Activated CD4-positive, alpha-beta memory T cell treated with anti-CD3 and anti-CD28 coated beads, Interleukin-2, amount 10 ng/mL, durations not matched to agents 7 days and 5 days (primary cell): ENCODE measurements at regions of chr12 and their contacts with region 1.

Region 1: DNA sequence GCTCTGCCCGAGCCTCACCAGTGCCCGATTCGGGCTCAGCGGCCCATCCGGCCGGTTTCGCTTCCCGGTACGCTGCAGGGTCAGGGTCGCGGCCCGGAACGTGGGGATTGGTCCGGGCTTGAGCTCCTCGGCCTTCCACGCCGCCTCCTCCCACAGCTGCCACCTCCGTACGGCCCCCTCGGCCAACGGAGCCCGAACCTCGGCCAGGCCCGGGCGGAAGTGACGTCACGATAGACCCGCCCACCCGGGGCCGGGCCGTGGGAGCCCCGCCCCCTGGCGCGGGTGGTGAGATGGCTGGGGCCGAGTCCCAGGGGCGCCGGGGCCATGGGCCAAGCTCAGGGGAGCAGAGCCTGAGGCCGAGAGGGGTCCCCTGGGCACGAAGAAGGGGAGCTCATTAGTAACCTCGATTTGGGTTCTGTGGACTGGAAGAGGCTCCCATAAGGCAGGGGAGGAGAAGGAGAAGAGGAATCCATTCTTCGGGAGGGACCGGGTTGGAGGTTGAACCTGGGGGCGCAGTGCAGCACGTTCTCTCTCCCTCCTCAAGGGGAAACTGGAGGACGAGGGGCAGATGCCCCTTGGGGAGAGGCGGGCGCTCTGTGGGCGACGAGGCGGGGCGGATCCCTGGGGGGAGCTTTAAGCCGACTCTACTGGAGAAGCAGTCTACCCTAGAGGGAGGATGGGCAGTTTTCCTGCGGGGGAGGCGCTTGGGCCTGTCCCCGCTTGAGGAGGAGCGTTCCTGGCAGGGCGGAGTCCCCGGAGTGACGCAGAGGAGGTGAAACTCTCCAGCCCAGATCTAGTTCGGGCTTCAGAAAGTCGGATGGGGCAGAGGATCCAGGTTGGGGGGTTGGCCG is at the start of gene MLF2:
- DNase-seq: peak; percentile 98
- H3K4me3 Mint-ChIP-seq: peak within 1 kb of the TSS; percentile 92
- H3K27ac Mint-ChIP-seq: peak within 1 kb of the TSS; percentile 90
- H3K4me1 Mint-ChIP-seq: peaks cover 25% of the 10 kb centered on the region
- H3K27me3 Mint-ChIP-seq: peaks cover 4% of the 10 kb centered on the region
- total RNA-seq, gene MLF2: 101 to 108 TPM

Region 2: GRCh38 chr12:6613776-6614512 is 139.2 kb before region 1 on chr12:
- CTCF ChIA-PET with region 1: no interaction called
- POLR2A ChIA-PET with region 1: interaction called, 10 read pairs
- DNase-seq: peak; percentile 61
- H3K4me3 Mint-ChIP-seq: no peak overlapping the region
- H3K27ac Mint-ChIP-seq: no peak overlapping the region
- H3K4me1 Mint-ChIP-seq: peaks cover 46% of the 10 kb centered on the region
- H3K27me3 Mint-ChIP-seq: no peaks in the 10 kb centered on the region

Region 3: GRCh38 chr12:6723607-6724396 is 29.3 kb before region 1 on chr12 and contains the start of gene COPS7A:
- CTCF ChIA-PET with region 1: interaction called, 26 read pairs
- POLR2A ChIA-PET with region 1: interaction called, 62 read pairs
- DNase-seq: peak; percentile 99
- H3K4me3 Mint-ChIP-seq: peak within 1 kb of the TSS; percentile 84
- H3K27ac Mint-ChIP-seq: peak within 1 kb of the TSS; percentile 92
- H3K4me1 Mint-ChIP-seq: peaks cover 22% of the 10 kb centered on the region
- H3K27me3 Mint-ChIP-seq: no peaks in the 10 kb centered on the region
- total RNA-seq, gene COPS7A: 28.4 to 29.0 TPM

Region 4: DNA sequence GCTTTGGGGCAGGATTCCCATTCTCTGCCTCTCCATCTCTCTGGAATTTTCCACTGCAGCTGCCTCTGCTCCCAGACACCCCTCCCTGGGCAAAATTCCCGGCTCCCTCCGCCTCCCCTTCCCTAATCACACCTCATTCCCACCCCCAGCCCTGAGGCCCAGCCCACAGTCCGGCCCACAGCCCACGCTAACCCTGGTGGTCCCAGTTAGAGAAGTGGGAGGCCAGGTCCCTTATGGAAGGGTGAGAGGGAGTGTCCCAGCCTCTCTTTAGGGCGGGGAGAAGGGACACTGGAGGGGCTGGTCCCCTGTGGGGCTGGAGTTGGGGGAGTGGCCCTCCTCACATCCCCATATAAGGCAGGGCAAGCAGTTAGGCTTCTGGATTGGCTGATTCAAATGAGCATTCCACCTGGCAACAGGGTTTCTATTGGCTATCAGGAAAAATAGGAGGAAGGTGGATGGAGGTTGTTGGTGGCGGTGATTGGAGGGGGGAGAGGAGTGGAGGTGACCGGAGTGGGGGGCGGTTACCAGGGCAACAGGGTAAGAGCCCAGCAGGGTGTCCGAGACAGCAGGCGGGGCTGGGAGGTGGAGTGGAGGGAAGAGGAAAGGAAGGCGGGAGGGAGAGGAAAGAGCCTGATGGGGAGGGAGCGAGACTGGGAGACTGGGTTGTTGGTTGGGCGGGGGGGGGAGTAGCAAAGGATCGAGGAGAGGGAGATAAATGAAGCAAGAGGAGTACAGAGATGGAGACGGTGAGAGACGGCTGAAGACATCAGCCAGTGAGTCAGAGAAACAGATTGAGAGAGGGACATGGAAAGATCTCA is 11.1 kb after region 1 on chr12:
- CTCF ChIA-PET with region 1: interaction called, 78 read pairs
- POLR2A ChIA-PET with region 1: interaction called, 73 read pairs
- DNase-seq: peak; percentile 71
- H3K4me3 Mint-ChIP-seq: peak overlapping the region; percentile 38
- H3K27ac Mint-ChIP-seq: no peak overlapping the region
- H3K4me1 Mint-ChIP-seq: peaks cover 42% of the 10 kb centered on the region
- H3K27me3 Mint-ChIP-seq: peaks cover 46% of the 10 kb centered on the region

Region 5: DNA sequence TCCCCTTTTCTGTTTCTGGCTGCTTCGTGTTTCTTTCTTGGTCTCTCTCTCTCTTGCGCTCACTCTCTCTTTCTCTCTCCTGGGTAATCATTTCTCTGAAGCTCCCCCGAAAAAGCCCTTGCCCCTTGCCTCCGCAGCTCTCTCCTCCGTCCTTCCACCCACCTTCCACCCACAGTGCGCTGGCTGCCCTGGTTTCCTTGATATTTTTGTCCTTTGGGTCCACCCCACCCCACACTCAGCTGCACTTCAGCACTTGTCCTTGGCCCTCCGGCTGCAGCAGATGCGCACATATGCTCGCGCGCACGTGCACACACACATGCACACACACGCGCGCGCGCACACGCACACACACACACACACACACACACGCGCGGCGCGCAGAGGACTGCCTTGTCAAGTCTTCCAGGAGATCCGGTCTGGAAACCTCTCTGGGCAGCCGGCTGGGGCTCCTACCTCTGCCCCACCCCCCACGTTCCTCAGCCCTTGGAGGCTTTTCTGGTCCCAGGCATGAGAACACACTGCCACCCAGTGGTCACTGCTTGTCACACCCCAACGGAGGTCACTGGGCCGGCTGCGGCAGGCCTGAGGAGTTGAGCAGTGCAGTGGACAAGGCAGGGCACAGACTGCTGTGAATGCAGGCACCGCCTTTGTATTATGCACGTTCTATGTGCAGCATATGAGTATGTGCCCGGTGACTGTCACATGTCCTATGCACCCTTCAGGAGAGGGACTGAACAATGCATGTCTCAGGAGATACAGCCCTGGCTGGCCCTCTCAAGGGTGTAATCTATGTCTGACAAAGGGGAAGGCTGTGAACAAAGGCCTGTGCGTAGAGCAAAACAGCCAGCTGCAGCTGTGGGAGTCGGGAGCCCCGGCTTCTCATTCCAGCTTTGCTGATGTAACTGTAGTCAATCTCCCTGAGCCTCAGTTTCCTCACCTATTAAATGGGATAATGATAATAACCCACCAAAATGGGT is 25.7 kb after region 1 on chr12:
- CTCF ChIA-PET with region 1: interaction called, 45 read pairs
- POLR2A ChIA-PET with region 1: interaction called, 37 read pairs
- DNase-seq: peak; percentile 91
- H3K4me3 Mint-ChIP-seq: peak overlapping the region; percentile 71
- H3K27ac Mint-ChIP-seq: peak overlapping the region; percentile 74
- H3K4me1 Mint-ChIP-seq: peaks cover 68% of the 10 kb centered on the region
- H3K27me3 Mint-ChIP-seq: peaks cover 6% of the 10 kb centered on the region

Region 6: DNA sequence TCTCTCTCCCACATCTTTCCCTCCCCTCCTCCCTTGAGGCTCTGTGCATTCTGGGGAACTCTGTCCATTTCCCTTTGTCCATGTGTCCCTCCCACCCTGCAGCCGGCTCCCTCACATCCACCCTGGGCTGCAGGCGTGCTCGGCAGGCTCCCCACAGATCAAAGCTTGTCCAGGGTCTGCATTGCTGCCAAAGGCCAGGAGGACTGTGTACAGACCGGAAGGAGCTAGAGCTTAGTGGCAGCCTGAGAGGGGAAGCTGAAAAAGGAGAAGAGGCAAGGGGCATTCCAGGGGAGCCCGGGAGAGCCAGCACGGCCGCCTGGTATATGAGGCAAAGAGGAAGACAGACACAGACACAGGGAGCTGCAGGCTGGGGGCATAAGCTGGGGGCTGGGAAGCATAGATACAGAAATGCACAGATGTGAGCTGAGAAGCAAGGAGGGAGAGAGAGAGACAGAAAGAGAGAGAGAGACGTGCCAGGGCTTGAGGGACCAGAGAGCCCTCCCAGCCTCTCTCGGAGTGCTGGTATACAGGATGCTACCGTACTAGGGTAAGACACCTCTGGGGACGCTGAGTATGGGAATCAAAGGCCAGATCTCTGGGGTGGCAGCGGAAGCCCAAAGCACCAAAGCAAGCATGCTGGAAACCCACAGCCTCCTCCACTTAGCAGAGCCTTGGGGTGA is 39.5 kb after region 1 on chr12:
- CTCF ChIA-PET with region 1: interaction called, 53 read pairs
- POLR2A ChIA-PET with region 1: interaction called, 63 read pairs
- DNase-seq: peak; percentile 70
- H3K4me3 Mint-ChIP-seq: peak overlapping the region; percentile 93
- H3K27ac Mint-ChIP-seq: peak overlapping the region; percentile 90
- H3K4me1 Mint-ChIP-seq: peaks cover 51% of the 10 kb centered on the region
- H3K27me3 Mint-ChIP-seq: no peaks in the 10 kb centered on the region

Region 7: DNA sequence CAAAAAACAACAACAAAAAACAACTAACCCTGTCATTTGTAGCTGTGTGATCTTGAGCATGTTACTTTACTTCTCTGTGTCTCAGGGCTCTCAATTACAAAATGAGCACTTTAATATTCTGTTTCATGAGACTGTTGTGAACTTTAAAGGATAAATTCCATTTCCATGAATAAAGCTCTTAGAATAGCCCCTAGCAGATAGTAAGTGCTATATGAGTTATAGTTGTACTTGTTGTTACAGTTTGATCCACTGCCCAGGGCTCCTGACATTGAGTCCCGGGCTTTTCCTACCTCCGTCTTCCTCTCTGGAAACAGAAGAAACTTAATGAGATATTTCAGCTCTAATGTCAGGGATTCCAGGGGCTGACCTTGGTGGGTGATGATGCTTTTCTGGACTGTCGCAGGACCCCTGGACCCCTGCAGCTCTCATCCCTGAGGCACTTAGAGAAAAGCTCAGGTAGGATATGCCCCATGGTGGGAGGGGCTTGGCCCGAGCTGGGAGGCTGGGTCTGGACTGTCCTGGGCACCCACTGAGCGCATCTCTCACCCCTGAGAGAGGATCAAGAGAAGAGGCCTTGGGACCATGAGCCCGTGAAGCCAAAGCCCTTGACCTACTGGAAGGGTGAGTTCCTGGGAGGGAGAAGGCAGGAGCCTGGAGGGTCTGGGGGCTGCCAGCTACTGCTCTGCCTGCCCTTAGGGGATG is 80.2 kb after region 1 on chr12:
- CTCF ChIA-PET with region 1: interaction called, 31 read pairs
- POLR2A ChIA-PET with region 1: interaction called, 33 read pairs
- DNase-seq: no peak
- H3K4me3 Mint-ChIP-seq: no peak overlapping the region
- H3K27ac Mint-ChIP-seq: no peak overlapping the region
- H3K4me1 Mint-ChIP-seq: peaks cover 17% of the 10 kb centered on the region
- H3K27me3 Mint-ChIP-seq: peaks cover 38% of the 10 kb centered on the region